ENCODE measurements at regions of chr19 and their contacts with region 1.

Region 1: GRCh38 chr19:49056010-49056901 is 1.3 kb downstream of the CGB7 start:
- DNase-seq: peak; percentile 42 to 52 (median 48)
- H3K4me3 ChIP-seq: peak overlapping the region; percentile 49 to 57
- H3K4me3 Mint-ChIP-seq: peak overlapping the region; percentile 79 to 93 (median 89)
- H3K27ac ChIP-seq: no peak overlapping the region
- H3K27ac Mint-ChIP-seq: peak overlapping the region in 2 of 7 donors; percentile 2 to 17
- H3K4me1 ChIP-seq: peaks cover 23% of the 10 kb centered on the region
- H3K4me1 Mint-ChIP-seq: peaks cover 7 to 27% (median 14%) of the 10 kb centered on the region in 4 donors
- H3K27me3 ChIP-seq: peaks cover 18% of the 10 kb centered on the region
- H3K27me3 Mint-ChIP-seq: peaks cover 16 to 24% of the 10 kb centered on the region in 2 donors

Region 2: DNA sequence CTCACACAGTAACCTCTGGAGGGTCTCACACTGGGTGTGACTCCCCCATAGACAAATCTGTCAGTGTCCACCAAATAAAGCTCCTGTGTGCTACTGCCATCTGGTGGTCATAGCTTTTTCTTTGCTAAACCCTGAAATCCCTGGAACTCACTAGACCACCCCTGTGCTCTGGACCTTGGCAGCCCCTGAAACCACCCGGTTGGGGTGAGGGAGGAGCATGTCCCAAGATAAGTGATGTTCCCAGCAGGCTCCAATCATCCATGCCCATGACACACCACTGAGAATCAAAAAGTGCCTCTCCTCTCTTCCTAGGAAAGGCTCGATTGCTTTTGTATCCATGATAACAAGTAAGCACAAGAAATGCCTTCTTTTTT is 213.5 kb before region 1 on chr19:
- CTCF ChIA-PET with region 1: no interaction called
- POLR2A ChIA-PET with region 1: no interaction called
- intact Hi-C with region 1: no loop called
- DNase-seq: peak; percentile 42 to 60 (median 55)
- H3K4me3 ChIP-seq: no peak overlapping the region
- H3K4me3 Mint-ChIP-seq: peak overlapping the region in 1 of 8 donors; percentile 33
- H3K27ac ChIP-seq: no peak overlapping the region
- H3K27ac Mint-ChIP-seq: no peak overlapping the region
- H3K4me1 ChIP-seq: no peaks in the 10 kb centered on the region
- H3K4me1 Mint-ChIP-seq: peaks cover 0 to 4% (median 2%) of the 10 kb centered on the region in 4 donors
- H3K27me3 ChIP-seq: no peaks in the 10 kb centered on the region
- H3K27me3 Mint-ChIP-seq: no peaks in the 10 kb centered on the region

Region 3: DNA sequence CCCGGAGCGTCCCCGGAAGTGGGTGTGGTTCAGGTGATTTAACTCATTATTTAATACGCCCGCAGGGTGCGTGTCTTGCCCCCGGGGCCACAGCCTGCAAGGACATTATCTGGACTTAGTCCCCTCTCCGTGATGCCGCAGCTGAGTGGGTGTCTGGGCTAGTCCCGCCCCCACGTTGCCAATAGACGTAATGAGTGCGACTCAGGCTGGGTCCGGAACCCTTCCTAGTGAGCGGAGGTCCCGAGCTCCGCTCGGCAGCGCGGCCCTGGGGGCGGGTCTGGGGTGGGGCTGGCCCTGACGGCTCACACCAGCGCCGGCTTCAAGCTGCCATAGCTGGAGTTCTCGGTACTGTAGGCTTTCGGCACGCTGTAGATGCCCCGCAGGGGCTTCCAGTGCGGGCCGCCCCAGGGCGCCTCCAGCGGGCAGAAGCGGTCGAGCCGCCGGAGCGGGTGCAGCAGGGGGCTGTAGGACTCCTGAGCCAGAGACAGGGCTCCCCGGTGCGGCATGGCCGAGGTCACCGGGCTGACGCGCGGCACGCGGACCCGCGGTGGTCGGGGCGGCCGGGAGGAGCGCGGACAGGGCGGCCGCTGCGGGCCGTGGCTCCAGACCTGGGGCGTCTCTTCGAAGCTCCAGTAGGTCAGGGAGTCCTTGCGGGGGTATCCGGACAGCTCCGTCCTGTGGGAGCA is 38.4 kb before region 1 on chr19:
- CTCF ChIA-PET with region 1: no interaction called
- POLR2A ChIA-PET with region 1: interaction called, 3 read pairs
- intact Hi-C with region 1: loop called (anchors 2 kb)
- DNase-seq: peak; percentile 62 to 76 (median 69)
- H3K4me3 ChIP-seq: peak overlapping the region in 1 of 2 donors; percentile 73
- H3K4me3 Mint-ChIP-seq: peak overlapping the region; percentile 84 to 94 (median 90)
- H3K27ac ChIP-seq: peak overlapping the region; percentile 23
- H3K27ac Mint-ChIP-seq: peak overlapping the region in 4 of 7 donors; percentile 13 to 55 (median 36)
- H3K4me1 ChIP-seq: peaks cover 24% of the 10 kb centered on the region
- H3K4me1 Mint-ChIP-seq: peaks cover 15 to 39% (median 25%) of the 10 kb centered on the region in 4 donors
- H3K27me3 ChIP-seq: no peaks in the 10 kb centered on the region
- H3K27me3 Mint-ChIP-seq: peaks cover 0 to 3% of the 10 kb centered on the region in 2 donors

Region 4: GRCh38 chr19:49133621-49134454 is 77.6 kb after region 1 on chr19:
- CTCF ChIA-PET with region 1: no interaction called
- POLR2A ChIA-PET with region 1: no interaction called
- intact Hi-C with region 1: no loop called
- DNase-seq: peak in 3 of 5 donors; percentile 34 to 56 (median 47)
- H3K4me3 ChIP-seq: peak overlapping the region in 1 of 2 donors; percentile 15
- H3K4me3 Mint-ChIP-seq: peak overlapping the region; percentile 13 to 81 (median 55)
- H3K27ac ChIP-seq: no peak overlapping the region
- H3K27ac Mint-ChIP-seq: peak overlapping the region in 2 of 7 donors; percentile 68 to 82
- H3K4me1 ChIP-seq: peaks cover 11% of the 10 kb centered on the region
- H3K4me1 Mint-ChIP-seq: peaks cover 2 to 29% (median 12%) of the 10 kb centered on the region in 4 donors
- H3K27me3 ChIP-seq: no peaks in the 10 kb centered on the region
- H3K27me3 Mint-ChIP-seq: peaks cover 4 to 10% of the 10 kb centered on the region in 2 donors

Measured in CD4-positive, alpha-beta memory T cell (primary cell).